ENCODE measurements at regions of chr14 and their contacts with region 1.

Region 1: DNA sequence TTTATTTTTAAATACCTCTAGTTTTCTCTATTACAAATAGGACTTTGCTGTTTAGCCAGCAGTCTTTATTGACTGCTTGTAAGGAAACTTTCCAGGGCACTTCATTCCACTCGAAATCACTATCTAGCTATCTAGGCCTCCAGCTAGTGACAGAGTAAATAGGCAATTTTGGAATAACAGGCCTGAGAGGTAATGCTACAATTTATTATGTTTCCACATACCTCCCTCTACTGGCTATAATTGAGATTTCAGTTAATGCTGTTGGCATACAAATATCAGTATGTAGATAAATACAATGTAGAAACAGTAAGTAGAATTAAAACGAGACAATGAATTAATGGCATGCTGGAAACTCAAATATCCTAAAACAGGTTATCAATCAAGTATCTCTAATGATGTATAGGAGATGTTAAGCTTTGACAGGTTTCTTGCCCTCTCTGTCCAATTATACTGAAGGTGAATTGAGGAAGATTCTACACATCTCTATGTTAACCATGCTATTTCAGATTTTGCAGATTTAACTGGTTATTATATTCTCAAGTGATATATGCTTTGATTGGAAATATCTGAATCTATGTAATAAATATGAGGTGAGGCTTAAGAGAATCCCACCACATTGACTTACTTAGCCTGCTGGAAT is 7.2 kb downstream of the DTD2 start:
- DNase-seq: no peak
- H3K4me3 ChIP-seq: no peak overlapping the region
- CTCF ChIP-seq: peak; percentile 40

Region 2: GRCh38 chr14:31435276-31435675 is 14.8 kb before region 1 on chr14:
- CTCF ChIA-PET with region 1: interaction called, 17 read pairs
- POLR2A ChIA-PET with region 1: no interaction called
- DNase-seq: peak; percentile 69
- H3K4me3 ChIP-seq: no peak overlapping the region
- CTCF ChIP-seq: no peak

Measured in AG04449 (cell line).